A673 (cell line): ENCODE measurements at regions of chr7 and their contacts with region 1.

Region 1: GRCh38 chr7:87933945-87934698 is at the start of gene ADAM22:
- DNase-seq: peak; percentile 97
- H3K4me3 ChIP-seq: peak within 1 kb of the TSS; percentile 93
- H3K27ac ChIP-seq: peak within 1 kb of the TSS; percentile 55
- H3K4me1 ChIP-seq: no peaks in the 10 kb centered on the region
- H3K27me3 ChIP-seq: no peaks in the 10 kb centered on the region
- CTCF ChIP-seq: no peak; the same call in 1 of the 2 replicates
- total RNA-seq, gene ADAM22: 6.9 and 7.1 TPM in 2 replicates

Region 2: GRCh38 chr7:87091495-87092190 is 842.5 kb before region 1 on chr7:
- CTCF ChIA-PET with region 1: no interaction called
- POLR2A ChIA-PET with region 1: no interaction called
- intact Hi-C with region 1: no loop called
- DNase-seq: no peak
- H3K4me3 ChIP-seq: no peak overlapping the region
- H3K27ac ChIP-seq: no peak overlapping the region
- H3K4me1 ChIP-seq: no peaks in the 10 kb centered on the region
- H3K27me3 ChIP-seq: no peaks in the 10 kb centered on the region
- CTCF ChIP-seq: no peak

Region 3: GRCh38 chr7:88101769-88102168 is 167.6 kb after region 1 on chr7:
- CTCF ChIA-PET with region 1: no interaction called
- POLR2A ChIA-PET with region 1: no interaction called
- intact Hi-C with region 1: loop called (anchors 10 kb)
- DNase-seq: no peak
- H3K4me3 ChIP-seq: no peak overlapping the region
- H3K27ac ChIP-seq: no peak overlapping the region
- H3K4me1 ChIP-seq: no peaks in the 10 kb centered on the region
- H3K27me3 ChIP-seq: no peaks in the 10 kb centered on the region
- CTCF ChIP-seq: no peak

Region 4: DNA sequence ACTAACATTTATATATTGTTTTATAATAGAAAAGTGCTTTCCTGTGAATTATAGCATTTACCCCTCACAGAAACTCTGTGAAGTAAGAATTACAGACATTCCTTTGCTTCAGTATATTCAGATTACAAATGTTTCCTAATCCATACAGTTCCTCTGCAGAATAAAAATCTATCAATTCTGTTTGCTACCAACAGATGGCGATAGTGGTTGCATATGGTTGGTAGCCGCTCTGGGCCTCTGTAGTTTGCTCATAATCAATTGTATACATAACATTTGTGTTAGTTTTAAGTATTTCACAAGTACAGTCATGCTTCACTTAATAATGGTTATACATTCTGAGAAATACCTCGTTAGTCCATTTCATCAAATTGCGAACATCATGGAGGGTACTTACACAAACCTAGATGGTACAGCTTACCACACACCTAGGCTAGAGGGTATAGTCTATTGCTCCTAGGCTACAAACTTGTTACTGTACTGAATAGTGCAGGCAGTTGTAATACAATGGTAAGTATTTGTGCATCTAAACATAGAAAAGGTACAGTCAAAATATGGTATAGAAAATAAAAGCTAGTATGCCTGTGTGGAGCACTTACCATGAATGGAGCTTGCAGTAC is 467.0 kb after region 1 on chr7:
- CTCF ChIA-PET with region 1: no interaction called
- POLR2A ChIA-PET with region 1: no interaction called
- intact Hi-C with region 1: no loop called
- DNase-seq: peak; percentile 35
- H3K4me3 ChIP-seq: no peak overlapping the region
- H3K27ac ChIP-seq: no peak overlapping the region
- H3K4me1 ChIP-seq: no peaks in the 10 kb centered on the region
- H3K27me3 ChIP-seq: no peaks in the 10 kb centered on the region
- CTCF ChIP-seq: peak; percentile 79